Motor neuron (in vitro differentiated cells): ENCODE measurements at regions of chr1 and their contacts with region 1.

Region 1: GRCh38 chr1:30779294-30780071 is 21.9 kb upstream of the LAPTM5 start:
- ATAC-seq: peak; percentile 46 to 79 (median 70)
- H3K4me3 ChIP-seq: no peak overlapping the region
- H3K27ac ChIP-seq: no peak overlapping the region
- H3K4me1 ChIP-seq: peaks cover 15 to 38% of the 10 kb centered on the region in 2 donors

Region 2: DNA sequence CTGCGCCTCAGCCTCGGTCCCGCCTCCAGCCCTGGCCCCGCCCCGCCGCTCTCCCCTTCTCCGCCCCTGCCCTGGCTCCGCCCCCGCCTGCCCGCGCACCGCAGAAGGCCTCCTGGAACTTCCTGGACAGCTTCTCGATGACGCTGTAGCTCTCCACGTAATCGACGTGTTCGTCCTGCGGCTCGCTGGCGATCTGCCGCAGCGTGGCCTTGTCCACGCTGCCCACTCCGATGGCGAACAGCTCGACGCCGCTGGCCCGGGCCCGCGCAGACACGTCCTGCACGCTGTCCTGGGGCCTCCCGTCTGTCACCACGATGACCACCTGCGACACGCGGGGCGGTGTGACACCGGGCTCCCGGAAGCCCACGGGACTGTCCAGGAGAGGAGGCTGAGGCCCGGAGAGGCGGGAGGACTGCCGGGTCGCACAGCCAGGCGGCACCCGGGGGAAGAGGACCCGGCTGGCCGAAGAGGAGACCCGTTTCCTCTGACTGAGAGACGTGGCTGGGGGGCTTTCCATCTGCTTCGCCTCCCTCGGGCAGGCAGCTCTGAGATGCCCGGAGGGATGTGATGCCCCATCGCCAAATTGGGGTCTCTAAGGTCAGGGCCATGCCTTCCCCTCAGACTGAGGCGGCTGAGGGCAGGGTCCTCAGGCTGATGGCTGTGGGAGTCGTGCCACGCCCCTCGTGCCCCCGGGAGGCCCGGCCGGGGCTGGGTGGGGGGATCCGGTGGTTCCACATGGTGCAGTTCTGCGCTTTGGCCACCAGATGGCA is 60.7 kb before region 1 on chr1:
- in situ Hi-C with region 1: loop called in 1 of 9 experiments (anchors 10 kb)
- ATAC-seq: peak; percentile 63 to 75 (median 66)
- H3K4me3 ChIP-seq: peak overlapping the region; percentile 28 to 41 (median 31)
- H3K27ac ChIP-seq: peak overlapping the region; percentile 96 to 98
- H3K4me1 ChIP-seq: peaks cover 6 to 8% of the 10 kb centered on the region in 2 donors

Region 3: DNA sequence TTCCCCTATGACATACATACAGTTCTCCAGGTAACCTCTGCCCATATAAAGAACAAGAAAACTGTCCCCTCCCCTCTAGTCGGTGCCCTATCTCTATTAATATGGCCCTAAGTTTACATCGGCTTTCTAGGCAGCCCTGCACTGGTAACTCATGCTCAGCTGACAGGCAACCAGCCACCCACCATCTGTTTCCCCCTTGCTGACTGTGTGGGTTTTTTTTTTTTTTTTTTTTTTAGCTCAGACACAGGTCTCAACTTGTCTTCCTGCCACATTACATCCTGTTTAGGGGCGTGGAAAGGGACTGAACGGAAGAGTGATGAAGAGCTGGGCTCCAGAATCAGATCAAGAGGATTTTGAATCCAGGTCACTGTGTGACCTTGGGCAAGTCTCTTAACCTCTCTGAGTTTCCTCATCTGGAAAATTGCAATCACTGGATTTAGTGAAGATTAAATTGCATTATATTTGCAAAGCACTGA is 35.9 kb before region 1 on chr1:
- in situ Hi-C with region 1: loop called in 1 of 9 experiments (anchors 5 kb)
- ATAC-seq: no peak
- H3K4me3 ChIP-seq: no peak overlapping the region
- H3K27ac ChIP-seq: no peak overlapping the region
- H3K4me1 ChIP-seq: peaks cover 10 to 29% of the 10 kb centered on the region in 2 donors